ENCODE measurements at regions of chr5 and their contacts with region 1.

Region 1: DNA sequence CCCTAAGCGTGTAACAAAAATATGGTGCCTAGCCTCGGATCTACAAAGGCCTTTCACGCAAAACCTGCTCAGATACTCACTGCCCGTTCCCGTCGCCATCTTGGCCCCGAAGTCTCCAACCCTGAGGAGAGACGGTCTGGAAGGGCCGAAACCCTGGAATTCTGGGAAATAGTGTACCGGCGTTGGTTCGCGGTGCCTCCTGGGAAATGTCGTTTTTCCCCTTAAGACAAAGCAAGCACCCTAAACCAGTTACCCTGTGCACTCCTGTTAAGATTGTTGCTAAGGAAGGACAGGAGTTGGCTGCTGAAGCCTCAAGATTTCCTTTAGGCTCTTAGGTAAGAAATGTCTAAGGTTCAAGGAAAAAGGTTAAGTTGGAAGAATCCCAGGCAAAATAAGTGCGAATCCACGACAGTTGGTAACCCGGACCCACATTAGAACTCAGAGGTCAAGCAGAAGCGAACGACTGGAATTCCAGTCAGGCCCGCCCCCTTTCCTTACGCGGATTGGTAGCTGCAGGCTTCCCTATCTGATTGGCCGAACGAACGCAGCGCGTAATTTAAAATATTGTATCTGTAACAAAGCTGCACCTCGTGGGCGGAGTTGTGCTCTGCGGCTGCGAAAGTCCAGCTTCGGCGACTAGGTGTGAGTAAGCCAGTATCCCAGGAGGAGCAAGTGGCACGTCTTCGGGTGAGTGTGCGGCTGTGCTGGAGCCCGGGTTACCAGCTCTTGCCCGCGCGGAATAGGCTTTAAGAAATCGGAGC is at the starts of genes BRD8 and KIF20A:
- DNase-seq: peak; percentile 67
- H3K4me3 ChIP-seq: peak within 1 kb of the TSS; percentile 84
- CTCF ChIP-seq: no peak

Region 2: GRCh38 chr5:138096363-138096762 is 82.3 kb before region 1 on chr5:
- CTCF ChIA-PET with region 1: no interaction called
- POLR2A ChIA-PET with region 1: no interaction called
- DNase-seq: no peak
- H3K4me3 ChIP-seq: no peak overlapping the region
- CTCF ChIP-seq: no peak

Region 3: GRCh38 chr5:138271281-138271680 is 92.6 kb after region 1 on chr5:
- CTCF ChIA-PET with region 1: no interaction called
- POLR2A ChIA-PET with region 1: no interaction called
- DNase-seq: no peak
- H3K4me3 ChIP-seq: no peak overlapping the region
- CTCF ChIP-seq: no peak

Region 4: GRCh38 chr5:138282920-138283742 is 104.4 kb after region 1 on chr5:
- CTCF ChIA-PET with region 1: interaction called, 23 read pairs
- POLR2A ChIA-PET with region 1: no interaction called
- DNase-seq: no peak
- H3K4me3 ChIP-seq: no peak overlapping the region
- CTCF ChIP-seq: peak; percentile 66

Region 5: DNA sequence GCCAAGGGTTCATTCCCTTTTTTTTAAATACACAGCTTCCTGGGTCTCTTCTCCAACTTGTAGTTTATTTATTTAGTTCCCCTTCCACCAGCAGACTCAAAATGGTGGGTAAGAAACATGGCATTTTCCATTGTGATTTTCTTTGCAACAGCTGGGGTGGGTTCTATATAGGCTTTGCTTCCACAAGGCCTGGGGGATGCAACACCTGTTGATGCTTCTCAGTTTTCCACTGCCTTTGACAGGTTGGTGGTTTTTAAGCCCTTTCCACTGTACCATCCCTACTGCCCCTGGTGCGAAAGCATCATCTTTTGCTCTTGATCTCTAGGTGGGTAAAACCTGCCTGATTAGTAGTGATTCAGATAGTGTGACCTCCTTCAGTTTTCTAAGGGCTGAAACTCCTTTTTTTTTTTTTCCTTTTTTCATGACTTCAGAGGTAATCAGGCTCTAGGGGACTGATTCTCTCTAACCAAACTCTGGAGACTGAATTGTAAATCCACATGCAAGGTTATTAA is 182.3 kb after region 1 on chr5:
- CTCF ChIA-PET with region 1: no interaction called
- POLR2A ChIA-PET with region 1: no interaction called
- DNase-seq: no peak
- H3K4me3 ChIP-seq: no peak overlapping the region
- CTCF ChIP-seq: no peak

Region 6: GRCh38 chr5:138408023-138408422 is 229.3 kb after region 1 on chr5:
- CTCF ChIA-PET with region 1: interaction called, 14 read pairs
- POLR2A ChIA-PET with region 1: no interaction called
- DNase-seq: no peak
- H3K4me3 ChIP-seq: no peak overlapping the region
- CTCF ChIP-seq: no peak

Measured in AG04449 (cell line).